CD14-positive monocyte (primary cell): ENCODE measurements at regions of chr17 and their contacts with region 1.

Region 1: GRCh38 chr17:3859940-3860339 is 13.9 kb upstream of the NCBP3 start:
- DNase-seq: no peak
- H3K4me3 ChIP-seq: no peak overlapping the region
- H3K4me3 Mint-ChIP-seq: no peak overlapping the region
- H3K27ac ChIP-seq: no peak overlapping the region
- H3K27ac Mint-ChIP-seq: peak overlapping the region in 1 of 7 donors; percentile 11
- H3K4me1 ChIP-seq: no peaks in the 10 kb centered on the region
- H3K4me1 Mint-ChIP-seq: no peaks in the 10 kb centered on the region
- H3K27me3 ChIP-seq: no peaks in the 10 kb centered on the region
- H3K27me3 Mint-ChIP-seq: peaks cover 0 to 3% (median 3%) of the 10 kb centered on the region in 3 donors
- CTCF ChIP-seq: no peak

Region 2: DNA sequence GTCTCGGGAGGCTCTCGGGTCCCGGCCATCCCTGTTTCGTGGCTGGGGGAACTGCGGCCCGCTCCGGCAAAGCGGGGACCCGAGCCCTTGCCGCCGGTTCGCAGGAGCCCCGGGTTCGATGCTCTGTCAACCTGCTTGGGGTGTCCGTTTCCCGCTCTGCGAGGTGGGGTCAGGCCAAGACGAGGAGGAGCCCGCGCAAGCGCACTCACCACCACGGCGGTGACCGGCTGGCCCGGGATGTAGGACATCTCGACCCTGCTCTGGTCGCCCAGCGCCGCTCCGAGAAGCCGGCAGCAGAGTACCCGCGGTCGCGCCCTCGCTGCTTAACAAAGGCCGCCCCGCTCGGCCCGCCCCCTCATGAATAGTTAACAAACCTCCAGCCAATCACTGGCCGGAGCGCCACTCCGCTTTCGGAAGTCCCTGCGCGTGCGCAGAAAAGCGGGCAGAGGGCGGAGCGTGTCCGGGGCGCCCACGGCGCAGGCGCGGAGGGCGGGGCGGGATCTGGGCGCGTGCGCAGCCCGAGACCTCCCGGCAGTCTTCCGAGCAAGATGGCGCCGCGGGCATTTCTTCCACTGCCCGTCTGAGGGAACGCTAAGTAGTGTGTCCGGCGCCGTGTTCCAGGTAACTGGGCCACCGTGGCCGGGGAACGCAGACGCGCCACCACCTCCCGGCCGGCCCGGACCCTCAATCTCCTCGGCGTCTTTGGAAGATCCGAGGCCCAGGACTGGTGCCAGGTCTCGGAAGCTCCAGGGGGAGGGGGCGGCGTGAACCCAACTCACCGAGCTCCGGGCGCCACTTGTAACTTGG is 191.5 kb before region 1 on chr17 and contains the starts of genes EMC6 and TAX1BP3:
- intact Hi-C with region 1: no loop called
- DNase-seq: peak; percentile 95 to 97 (median 96)
- H3K4me3 ChIP-seq: peak within 1 kb of the TSS; percentile 74 to 99 (median 94)
- H3K4me3 Mint-ChIP-seq: peak within 1 kb of the TSS; percentile 86 to 96
- H3K27ac ChIP-seq: peak within 1 kb of the TSS; percentile 68 to 86
- H3K27ac Mint-ChIP-seq: peak within 1 kb of the TSS; percentile 83 to 94 (median 89)
- H3K4me1 ChIP-seq: peaks cover 16 to 23% of the 10 kb centered on the region in 2 donors
- H3K4me1 Mint-ChIP-seq: peaks cover 21% of the 10 kb centered on the region
- H3K27me3 ChIP-seq: no peaks in the 10 kb centered on the region
- H3K27me3 Mint-ChIP-seq: peaks cover 0 to 4% (median 0%) of the 10 kb centered on the region in 3 donors
- CTCF ChIP-seq: no peak
- polyA plus RNA-seq, gene EMC6: 24.4 to 118 (median 105) TPM
- polyA plus RNA-seq, gene TAX1BP3: 29.6 to 71.8 (median 70.9) TPM

Region 3: DNA sequence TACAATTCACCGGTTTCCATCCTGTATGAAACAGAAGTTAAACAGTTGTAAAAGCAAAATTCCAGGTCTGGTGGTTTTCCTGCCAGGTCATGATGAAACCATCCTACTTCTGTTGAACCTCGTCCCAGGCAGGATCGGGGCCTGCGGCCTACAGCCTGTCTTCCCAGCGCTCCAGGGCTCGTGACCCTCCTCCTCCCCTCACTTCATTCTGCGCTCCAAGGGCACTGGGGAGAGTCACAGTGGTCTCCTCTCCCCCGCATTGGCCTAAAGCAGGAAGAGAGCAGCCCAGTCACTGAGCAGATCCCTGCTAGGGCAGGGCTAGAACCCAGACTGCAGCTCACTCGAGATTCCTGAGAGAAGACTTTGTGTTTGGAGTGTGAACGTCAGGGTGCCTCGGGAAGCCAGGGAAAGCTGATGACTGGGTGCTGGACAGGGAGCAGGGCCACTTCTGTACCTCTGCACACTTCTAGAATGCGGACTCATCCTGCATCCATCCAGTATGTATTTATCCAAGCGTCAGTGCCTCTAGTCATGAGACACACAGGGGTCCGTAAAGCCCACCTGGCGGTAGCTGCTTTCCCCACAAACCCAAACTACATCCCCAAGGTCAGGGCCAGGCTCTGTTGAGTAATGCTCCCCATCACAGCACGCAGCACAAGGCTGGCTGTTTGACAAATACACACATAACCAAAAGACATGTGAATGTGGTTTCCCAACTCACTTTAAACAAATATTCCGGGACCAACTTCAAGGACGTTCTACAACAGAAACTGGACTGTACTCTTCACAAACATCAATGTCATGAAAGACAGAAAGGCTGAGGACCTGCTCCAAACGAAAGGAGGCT is 57.3 kb before region 1 on chr17:
- intact Hi-C with region 1: no loop called
- DNase-seq: peak; percentile 69 to 76 (median 72)
- H3K4me3 ChIP-seq: peak overlapping the region in 1 of 3 experiments; percentile 58
- H3K4me3 Mint-ChIP-seq: peak overlapping the region; percentile 45 to 80
- H3K27ac ChIP-seq: peak overlapping the region; percentile 94 to 96
- H3K27ac Mint-ChIP-seq: peak overlapping the region; percentile 89 to 99 (median 96)
- H3K4me1 ChIP-seq: peaks cover 70 to 72% of the 10 kb centered on the region in 2 donors
- H3K4me1 Mint-ChIP-seq: peaks cover 67% of the 10 kb centered on the region
- H3K27me3 ChIP-seq: no peaks in the 10 kb centered on the region
- H3K27me3 Mint-ChIP-seq: peaks cover 0 to 2% (median 2%) of the 10 kb centered on the region in 3 donors
- CTCF ChIP-seq: no peak

Region 4: DNA sequence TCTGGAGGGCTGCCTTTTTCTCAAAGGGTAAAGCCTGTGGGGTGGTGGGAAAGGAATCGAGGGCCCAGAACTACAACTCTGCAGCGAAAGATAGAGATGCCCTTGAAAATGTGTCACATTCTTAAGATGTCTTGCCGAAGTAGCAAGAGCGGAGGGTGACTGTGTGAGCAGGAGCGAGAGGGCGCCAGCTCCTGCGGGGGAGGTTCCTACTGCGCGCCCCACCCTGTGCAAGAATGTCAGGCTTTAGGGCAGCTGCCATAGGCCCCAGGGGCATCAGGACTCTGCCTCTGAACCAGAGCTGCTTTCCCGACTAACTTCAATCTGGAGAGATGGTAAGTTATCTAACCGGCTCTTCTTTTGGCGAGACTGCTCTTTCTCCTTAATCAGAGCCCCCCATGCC is 47.2 kb before region 1 on chr17:
- intact Hi-C with region 1: no loop called
- DNase-seq: no peak
- H3K4me3 ChIP-seq: no peak overlapping the region
- H3K4me3 Mint-ChIP-seq: no peak overlapping the region
- H3K27ac ChIP-seq: no peak overlapping the region
- H3K27ac Mint-ChIP-seq: peak overlapping the region in 2 of 7 donors; percentile 47 to 64
- H3K4me1 ChIP-seq: no peaks in the 10 kb centered on the region
- H3K4me1 Mint-ChIP-seq: no peaks in the 10 kb centered on the region
- H3K27me3 ChIP-seq: no peaks in the 10 kb centered on the region
- H3K27me3 Mint-ChIP-seq: peaks cover 0 to 4% (median 1%) of the 10 kb centered on the region in 3 donors
- CTCF ChIP-seq: no peak

Region 5: GRCh38 chr17:3907483-3908216 is 47.7 kb after region 1 on chr17:
- intact Hi-C with region 1: loop called (anchors 5 to 10 kb)
- DNase-seq: no peak
- H3K4me3 ChIP-seq: no peak overlapping the region
- H3K4me3 Mint-ChIP-seq: no peak overlapping the region
- H3K27ac ChIP-seq: peak overlapping the region in 1 of 2 donors; percentile 31
- H3K27ac Mint-ChIP-seq: peak overlapping the region in 4 of 7 donors; percentile 2 to 79 (median 40)
- H3K4me1 ChIP-seq: peaks cover 19 to 20% of the 10 kb centered on the region in 2 donors
- H3K4me1 Mint-ChIP-seq: peaks cover 30% of the 10 kb centered on the region
- H3K27me3 ChIP-seq: no peaks in the 10 kb centered on the region
- H3K27me3 Mint-ChIP-seq: peaks cover 0 to 2% (median 1%) of the 10 kb centered on the region in 3 donors
- CTCF ChIP-seq: no peak

Region 6: GRCh38 chr17:4163945-4164344 is 304.0 kb after region 1 on chr17:
- intact Hi-C with region 1: no loop called
- DNase-seq: peak in 2 of 3 donors; percentile 5 to 31
- H3K4me3 ChIP-seq: no peak overlapping the region
- H3K4me3 Mint-ChIP-seq: no peak overlapping the region
- H3K27ac ChIP-seq: peak overlapping the region in 1 of 2 donors; percentile 17
- H3K27ac Mint-ChIP-seq: peak overlapping the region in 6 of 7 donors; percentile 55 to 93 (median 72)
- H3K4me1 ChIP-seq: peaks cover 48 to 53% of the 10 kb centered on the region in 2 donors
- H3K4me1 Mint-ChIP-seq: peaks cover 50% of the 10 kb centered on the region
- H3K27me3 ChIP-seq: no peaks in the 10 kb centered on the region
- H3K27me3 Mint-ChIP-seq: peaks cover 0 to 3% (median 0%) of the 10 kb centered on the region in 3 donors
- CTCF ChIP-seq: no peak